ENCODE measurements at regions of chr11 and their contacts with region 1.

Region 1: DNA sequence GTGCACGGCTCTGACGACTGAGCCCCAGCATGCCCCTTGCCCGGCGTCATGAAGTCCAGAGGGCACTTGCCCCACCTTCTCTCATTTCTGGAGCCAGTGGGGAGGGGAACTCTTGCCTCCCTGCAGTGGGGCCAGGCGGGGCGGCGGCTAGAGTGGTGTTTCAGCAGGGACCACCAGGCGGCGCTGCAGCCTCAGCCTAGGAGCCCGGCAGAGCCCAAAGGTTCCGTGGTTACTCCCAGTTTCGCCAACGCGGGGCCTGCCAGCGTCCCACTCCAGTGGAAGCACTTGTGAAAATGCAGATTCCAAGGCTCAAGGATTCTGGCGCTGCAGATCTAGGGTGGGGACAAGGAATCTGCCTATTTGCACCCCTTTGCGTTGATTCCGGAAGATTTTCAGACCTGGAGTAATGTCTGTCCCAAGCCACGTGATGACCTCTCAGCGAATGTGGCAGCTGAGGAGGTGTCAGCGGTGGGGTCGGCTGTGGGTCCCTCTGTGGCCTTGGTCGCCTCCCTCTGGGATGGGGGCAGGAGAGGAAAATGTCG is 55.7 kb downstream of the CD82 start:
- DNase-seq: peak; percentile 81 to 87 (median 84)
- ATAC-seq: peak; percentile 94
- H3K4me3 ChIP-seq: peak overlapping the region; percentile 14; the same call in 1 of the 2 replicates
- H3K27ac ChIP-seq: no peak overlapping the region
- H3K4me1 ChIP-seq: peaks cover 0 to 26% of the 10 kb centered on the region in 2 experiments; a peak in 3 of 5 replicates
- H3K27me3 ChIP-seq: peaks cover 0 to 19% of the 10 kb centered on the region in 2 experiments; a peak in 2 of 5 replicates
- CTCF ChIP-seq: peak; percentile 93 to 96 (median 94)
- EP300 ChIP-seq: no peak
- POLR2A ChIP-seq: no peak
- RAD21 ChIP-seq: peak; percentile 98

Region 2: GRCh38 chr11:44519989-44520737 is 101.0 kb before region 1 on chr11:
- CTCF ChIA-PET with region 1: interaction called, 16 read pairs
- POLR2A ChIA-PET with region 1: no interaction called
- in situ Hi-C with region 1: no loop called
- intact Hi-C with region 1: no loop called
- DNase-seq: no peak
- ATAC-seq: no peak
- H3K4me3 ChIP-seq: no peak overlapping the region
- H3K27ac ChIP-seq: no peak overlapping the region
- H3K4me1 ChIP-seq: peaks cover 16 to 20% of the 10 kb centered on the region in 2 experiments
- H3K27me3 ChIP-seq: no peaks in the 10 kb centered on the region
- CTCF ChIP-seq: no peak
- EP300 ChIP-seq: no peak
- POLR2A ChIP-seq: no peak
- RAD21 ChIP-seq: no peak

Region 3: GRCh38 chr11:44556735-44557409 is 64.3 kb before region 1 on chr11:
- CTCF ChIA-PET with region 1: interaction called, 81 read pairs
- POLR2A ChIA-PET with region 1: interaction called, 7 read pairs
- in situ Hi-C with region 1: no loop called
- intact Hi-C with region 1: loop called (anchors 1 kb)
- DNase-seq: peak in 2 of 4 experiments; percentile 35 to 78
- ATAC-seq: peak; percentile 92
- H3K4me3 ChIP-seq: no peak overlapping the region
- H3K27ac ChIP-seq: no peak overlapping the region
- H3K4me1 ChIP-seq: peaks cover 8 to 30% of the 10 kb centered on the region in 2 experiments; a peak in 4 of 5 replicates
- H3K27me3 ChIP-seq: no peaks in the 10 kb centered on the region
- CTCF ChIP-seq: peak; percentile 72 to 89 (median 80)
- EP300 ChIP-seq: no peak
- POLR2A ChIP-seq: no peak
- RAD21 ChIP-seq: peak; percentile 96 to 97

Region 4: DNA sequence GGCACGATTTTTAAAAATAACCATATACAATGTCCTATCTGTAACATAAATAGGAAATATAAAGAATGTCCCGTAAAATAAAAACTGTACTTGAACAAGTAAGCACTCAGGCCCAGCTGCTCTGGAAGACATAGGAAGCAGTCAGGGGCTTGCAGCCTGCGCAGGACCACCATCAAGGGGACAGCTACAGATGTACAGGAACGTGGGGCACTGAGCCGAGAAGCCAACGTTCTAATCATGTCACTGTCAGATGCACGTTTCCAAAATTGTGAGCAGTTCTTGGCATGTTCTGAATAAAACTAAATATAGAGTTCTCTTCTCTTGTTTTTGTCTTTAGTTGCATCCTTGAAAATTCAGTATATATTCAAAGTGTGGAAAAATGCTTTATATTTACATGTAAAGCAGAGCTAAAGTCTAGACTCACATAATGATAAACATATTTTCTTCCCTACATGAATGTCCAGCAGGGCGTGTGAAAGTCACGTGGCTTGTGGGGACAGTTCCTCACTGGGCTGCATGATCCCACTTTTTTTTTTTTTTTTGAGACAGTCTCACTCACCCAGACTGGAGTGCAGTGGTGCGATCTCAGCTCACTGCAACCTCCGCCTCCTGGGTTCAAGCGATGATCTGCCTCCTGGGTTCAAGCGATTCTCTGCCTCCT is 77.2 kb after region 1 on chr11:
- CTCF ChIA-PET with region 1: interaction called, 5 read pairs
- POLR2A ChIA-PET with region 1: no interaction called
- in situ Hi-C with region 1: no loop called
- intact Hi-C with region 1: loop called (anchors 5 kb)
- DNase-seq: peak in 1 of 4 experiments; percentile 12
- ATAC-seq: peak; percentile 67
- H3K4me3 ChIP-seq: no peak overlapping the region
- H3K27ac ChIP-seq: no peak overlapping the region
- H3K4me1 ChIP-seq: no peaks in the 10 kb centered on the region; a peak in 2 of 5 replicates
- H3K27me3 ChIP-seq: peaks cover 2 to 14% of the 10 kb centered on the region in 2 experiments; a peak in 3 of 5 replicates
- CTCF ChIP-seq: peak in 2 of 3 experiments; percentile 28 to 37; a peak in 2 of 6 replicates
- EP300 ChIP-seq: no peak
- POLR2A ChIP-seq: no peak
- RAD21 ChIP-seq: peak; percentile 42 to 46

Region 5: GRCh38 chr11:44893846-44894617 is 272.8 kb after region 1 on chr11:
- CTCF ChIA-PET with region 1: interaction called, 16 read pairs
- POLR2A ChIA-PET with region 1: interaction called, 3 read pairs
- in situ Hi-C with region 1: no loop called
- intact Hi-C with region 1: loop called (anchors 1 kb)
- DNase-seq: peak; percentile 68 to 85 (median 78)
- ATAC-seq: peak; percentile 99
- H3K4me3 ChIP-seq: no peak overlapping the region
- H3K27ac ChIP-seq: no peak overlapping the region
- H3K4me1 ChIP-seq: peaks cover 0 to 4% of the 10 kb centered on the region in 2 experiments; a peak in 1 of 5 replicates
- H3K27me3 ChIP-seq: peaks cover 0 to 37% of the 10 kb centered on the region in 2 experiments; a peak in 4 of 5 replicates
- CTCF ChIP-seq: peak; percentile 90 to 92 (median 91)
- EP300 ChIP-seq: no peak
- POLR2A ChIP-seq: no peak
- RAD21 ChIP-seq: peak; percentile 84 to 92

Region 6: GRCh38 chr11:44911029-44911814 is 290.0 kb after region 1 on chr11:
- CTCF ChIA-PET with region 1: interaction called, 42 read pairs
- POLR2A ChIA-PET with region 1: interaction called, 4 read pairs
- in situ Hi-C with region 1: loop called (anchors 5 kb)
- intact Hi-C with region 1: loop called (anchors 1 kb)
- DNase-seq: peak; percentile 72 to 86 (median 76)
- ATAC-seq: peak; percentile 95
- H3K4me3 ChIP-seq: no peak overlapping the region
- H3K27ac ChIP-seq: no peak overlapping the region
- H3K4me1 ChIP-seq: peaks cover 4 to 17% of the 10 kb centered on the region in 2 experiments; a peak in 4 of 5 replicates
- H3K27me3 ChIP-seq: peaks cover 8 to 51% of the 10 kb centered on the region in 2 experiments; a peak in 4 of 5 replicates
- CTCF ChIP-seq: peak; percentile 70 to 85 (median 79)
- EP300 ChIP-seq: no peak
- POLR2A ChIP-seq: no peak
- RAD21 ChIP-seq: peak; percentile 80 to 81

Region 7: GRCh38 chr11:45102810-45103621 is 481.8 kb after region 1 on chr11:
- CTCF ChIA-PET with region 1: interaction called, 4 read pairs
- POLR2A ChIA-PET with region 1: no interaction called
- in situ Hi-C with region 1: no loop called
- intact Hi-C with region 1: loop called (anchors 5 kb)
- DNase-seq: peak; percentile 70 to 85 (median 80)
- ATAC-seq: peak; percentile 80
- H3K4me3 ChIP-seq: no peak overlapping the region
- H3K27ac ChIP-seq: no peak overlapping the region
- H3K4me1 ChIP-seq: no peaks in the 10 kb centered on the region; a peak in 1 of 5 replicates
- H3K27me3 ChIP-seq: peaks cover 0 to 12% of the 10 kb centered on the region in 2 experiments; a peak in 2 of 5 replicates
- CTCF ChIP-seq: peak; percentile 88 to 90 (median 88)
- EP300 ChIP-seq: no peak
- POLR2A ChIP-seq: no peak
- RAD21 ChIP-seq: peak; percentile 91 to 94

Measured in K562 (cell line).